Psoas muscle (tissue), 8 donors: ENCODE measurements at regions of chr12 and their contacts with region 1.

Region 1: DNA sequence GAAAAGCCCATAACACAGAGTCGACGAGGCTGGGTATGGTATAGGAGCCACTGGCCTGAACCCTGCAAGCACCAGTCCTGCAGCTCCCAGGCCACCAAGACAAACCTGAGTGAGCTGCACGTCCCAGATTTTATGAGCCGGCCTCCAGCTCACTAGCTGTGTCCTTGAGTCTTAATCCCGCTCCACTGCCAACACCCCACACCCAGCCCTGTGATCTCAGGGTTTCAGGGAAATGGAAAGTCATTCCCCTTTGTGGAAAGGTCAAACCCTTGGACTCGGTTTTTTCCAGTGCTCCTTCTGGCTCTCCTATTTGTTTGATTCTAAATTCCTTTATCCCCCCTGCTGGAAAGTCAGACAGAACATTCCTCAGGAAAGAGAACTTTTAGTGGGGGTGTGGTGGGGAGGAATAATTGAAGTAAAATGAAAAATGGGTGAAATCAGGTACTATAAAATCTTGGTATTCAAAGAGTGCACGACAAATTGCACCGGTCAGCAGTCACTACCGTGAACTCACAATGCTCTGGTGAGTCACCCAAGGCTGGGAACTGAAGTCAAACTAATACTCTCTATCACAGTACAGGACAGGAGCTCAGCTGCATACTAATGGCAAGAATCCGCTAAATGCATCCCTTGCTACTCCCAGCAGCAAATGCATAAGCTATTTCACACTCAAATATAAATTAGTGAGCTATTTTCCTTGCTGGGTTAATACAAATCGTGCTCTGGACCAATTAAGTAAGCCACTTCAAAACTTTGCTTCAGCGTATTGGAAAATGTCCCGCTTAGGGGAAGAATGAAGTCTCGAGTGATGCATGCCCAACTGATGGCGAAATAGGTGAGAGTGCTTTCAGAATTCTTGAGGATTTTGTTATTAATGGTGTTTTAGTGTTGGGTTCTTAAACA is 9.0 kb downstream of the PITPNM2 start:
- DNase-seq: peak in 1 of 2 donors; percentile 71
- ATAC-seq: peak; percentile 89 to 94 (median 92)
- H3K4me3 ChIP-seq: no peak overlapping the region
- H3K27ac ChIP-seq: peak overlapping the region; percentile 48
- H3K4me1 ChIP-seq: peaks cover 25% of the 10 kb centered on the region
- H3K27me3 ChIP-seq: no peaks in the 10 kb centered on the region
- CTCF ChIP-seq: no peak

Region 2: GRCh38 chr12:123089631-123090353 is 52.1 kb before region 1 on chr12:
- intact Hi-C with region 1: loop called in 1 of 2 experiments (anchors 10 kb)
- DNase-seq: no peak
- ATAC-seq: no peak
- H3K4me3 ChIP-seq: no peak overlapping the region
- H3K27ac ChIP-seq: no peak overlapping the region
- H3K4me1 ChIP-seq: peaks cover 32% of the 10 kb centered on the region
- H3K27me3 ChIP-seq: no peaks in the 10 kb centered on the region
- CTCF ChIP-seq: no peak

Region 3: GRCh38 chr12:123180171-123180570 is 38.3 kb after region 1 on chr12:
- intact Hi-C with region 1: no loop called
- DNase-seq: no peak
- ATAC-seq: no peak
- H3K4me3 ChIP-seq: no peak overlapping the region
- H3K27ac ChIP-seq: no peak overlapping the region
- H3K4me1 ChIP-seq: no peaks in the 10 kb centered on the region
- H3K27me3 ChIP-seq: no peaks in the 10 kb centered on the region
- CTCF ChIP-seq: no peak